RWPE1 (cell line): ENCODE measurements at regions of chr20 and their contacts with region 1.

Region 1: DNA sequence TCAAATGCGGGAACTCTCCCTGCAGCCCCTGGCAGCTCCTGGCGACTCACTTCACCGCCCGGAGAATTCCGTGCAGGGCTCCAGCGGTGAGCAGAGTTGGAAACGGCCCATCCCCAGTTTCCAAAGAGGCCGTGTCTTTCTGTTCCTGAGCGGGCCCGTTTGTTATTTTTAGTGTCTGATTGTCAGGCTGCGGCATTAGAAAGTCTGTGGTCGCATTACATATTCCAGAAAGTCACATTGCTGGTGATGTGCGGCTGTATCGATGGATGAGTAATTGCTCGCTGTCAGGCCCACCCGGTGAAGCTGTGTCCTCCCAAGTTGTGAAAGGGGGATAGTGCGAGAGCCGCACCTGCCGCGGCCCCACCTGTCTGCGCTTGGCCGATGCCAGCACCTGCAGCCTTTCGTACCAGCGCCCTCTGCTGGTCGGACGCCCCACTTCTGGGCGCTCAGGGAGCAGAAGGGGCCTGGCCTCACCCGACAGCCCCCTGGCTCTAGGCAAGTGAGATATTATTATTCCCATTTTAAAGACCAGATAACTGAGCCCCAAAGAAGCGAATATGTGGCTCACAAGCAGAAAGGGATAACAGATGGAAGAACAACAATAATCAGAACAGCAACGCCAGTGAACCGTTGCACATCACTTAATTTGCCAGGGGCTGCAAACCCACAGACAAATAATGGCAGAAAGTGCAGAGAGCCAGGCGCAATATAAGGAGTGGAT is 244.9 kb downstream of the TSHZ2 start:
- DNase-seq: peak; percentile 78
- H3K27ac ChIP-seq: peak overlapping the region; percentile 42
- CTCF ChIP-seq: peak; percentile 99

Region 2: DNA sequence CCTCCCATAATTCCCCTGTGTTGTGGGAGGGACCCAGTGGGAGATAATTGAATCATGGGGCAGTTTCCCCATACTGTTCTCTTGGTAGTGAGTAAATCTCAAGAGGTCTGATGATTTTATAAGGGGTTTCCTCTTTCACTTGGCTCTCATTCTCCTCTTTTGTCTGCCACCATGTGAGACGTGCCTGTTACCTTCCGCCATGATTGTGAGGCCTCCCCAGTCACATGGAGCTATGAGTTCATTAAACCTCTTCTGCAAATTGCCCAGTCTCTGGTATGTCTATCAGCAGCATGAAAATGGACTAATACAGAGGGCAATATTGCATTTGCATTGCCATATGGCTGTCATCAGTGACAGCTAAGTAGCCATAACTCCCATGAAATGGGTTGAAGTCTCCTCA is 313.4 kb after region 1 on chr20:
- CTCF ChIA-PET with region 1: no interaction called
- POLR2A ChIA-PET with region 1: no interaction called
- DNase-seq: no peak
- H3K27ac ChIP-seq: no peak overlapping the region
- CTCF ChIP-seq: no peak

Region 3: DNA sequence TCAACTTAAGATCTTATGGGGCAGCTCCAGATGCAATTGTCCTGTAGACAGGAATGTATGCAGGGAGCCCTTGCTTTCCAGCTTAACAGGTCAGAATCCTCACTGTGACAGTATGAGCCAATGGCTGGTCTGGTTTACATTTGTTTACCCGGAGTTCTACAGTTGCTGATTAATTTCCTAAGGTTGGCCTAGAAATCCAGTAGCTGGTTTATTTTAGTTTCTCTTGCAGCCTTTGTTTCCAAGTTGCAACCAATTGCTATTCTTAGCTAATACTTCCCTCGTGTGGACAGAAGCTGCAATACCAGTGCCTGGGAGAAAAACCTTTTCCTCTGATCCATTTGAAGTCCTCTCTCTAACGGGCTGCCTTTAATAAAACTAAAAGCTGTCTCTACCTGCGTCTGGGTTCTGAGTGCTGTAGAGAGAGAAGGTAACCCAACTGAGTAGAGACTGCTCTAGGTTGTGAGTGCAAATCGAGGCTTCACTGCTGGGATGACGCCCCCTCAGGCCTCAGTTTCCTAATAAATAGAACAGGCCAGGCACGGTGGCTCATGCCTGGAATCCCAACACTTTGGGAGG is 330.7 kb after region 1 on chr20:
- CTCF ChIA-PET with region 1: interaction called, 10 read pairs
- POLR2A ChIA-PET with region 1: no interaction called
- DNase-seq: peak; percentile 92
- H3K27ac ChIP-seq: no peak overlapping the region
- CTCF ChIP-seq: peak; percentile 96